ENCODE measurements at regions of chr4 and their contacts with region 1.

Region 1: GRCh38 chr4:140326395-140326993 is 47.0 kb upstream of the SCOC start:
- DNase-seq: peak; percentile 41
- H3K4me3 ChIP-seq: no peak overlapping the region
- H3K27ac ChIP-seq: no peak overlapping the region
- H3K4me1 ChIP-seq: no peaks in the 10 kb centered on the region
- H3K27me3 ChIP-seq: peaks cover 4% of the 10 kb centered on the region
- CTCF ChIP-seq: peak; percentile 42

Region 2: GRCh38 chr4:139651282-139652194 is 675.0 kb before region 1 on chr4:
- intact Hi-C with region 1: loop called (anchors 10 kb)
- DNase-seq: peak; percentile 73
- H3K4me3 ChIP-seq: no peak overlapping the region
- H3K27ac ChIP-seq: no peak overlapping the region
- H3K4me1 ChIP-seq: no peaks in the 10 kb centered on the region
- H3K27me3 ChIP-seq: no peaks in the 10 kb centered on the region
- CTCF ChIP-seq: peak; percentile 91

Region 3: GRCh38 chr4:139734875-139735380 is 591.6 kb before region 1 on chr4:
- intact Hi-C with region 1: loop called (anchors 10 kb)
- DNase-seq: peak; percentile 71
- H3K4me3 ChIP-seq: peak overlapping the region; percentile 33
- H3K27ac ChIP-seq: no peak overlapping the region
- H3K4me1 ChIP-seq: no peaks in the 10 kb centered on the region
- H3K27me3 ChIP-seq: no peaks in the 10 kb centered on the region
- CTCF ChIP-seq: peak; percentile 57

Region 4: GRCh38 chr4:140012688-140013486 is 313.6 kb before region 1 on chr4:
- intact Hi-C with region 1: loop called (anchors 5 kb)
- DNase-seq: peak; percentile 87
- H3K4me3 ChIP-seq: no peak overlapping the region
- H3K27ac ChIP-seq: no peak overlapping the region
- H3K4me1 ChIP-seq: no peaks in the 10 kb centered on the region
- H3K27me3 ChIP-seq: no peaks in the 10 kb centered on the region
- CTCF ChIP-seq: peak; percentile 54

Region 5: DNA sequence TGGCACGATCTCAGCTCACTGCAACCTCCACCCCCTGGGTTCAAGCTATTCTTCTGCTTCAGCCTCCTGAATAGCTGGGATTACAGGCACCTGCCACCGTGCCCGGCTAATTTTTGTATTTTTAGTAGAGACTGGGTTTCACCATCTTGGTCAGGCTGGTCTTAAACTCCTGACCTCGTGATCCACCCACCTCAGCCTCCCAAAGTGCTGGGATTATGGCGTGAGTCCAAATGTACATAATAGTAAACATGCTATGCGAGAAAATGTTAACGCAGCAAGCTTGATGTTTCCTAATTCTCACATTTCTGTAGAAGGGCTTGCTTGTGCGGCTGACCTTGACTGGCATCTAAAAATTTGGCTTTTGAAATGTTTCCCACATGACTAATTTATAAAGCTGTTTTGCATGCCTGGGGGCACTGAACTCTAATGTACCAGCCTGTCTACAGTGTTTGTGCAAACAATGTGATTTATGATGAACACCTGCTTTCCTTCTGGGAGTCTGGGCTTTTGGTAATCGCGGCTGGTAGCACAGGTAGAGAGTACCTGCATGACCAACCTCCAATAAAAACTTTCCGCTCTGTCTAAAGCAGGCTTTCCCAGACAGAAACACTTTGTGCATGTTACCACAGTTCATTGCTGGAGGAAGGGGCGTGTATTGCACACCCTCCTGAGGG is 1526.7 kb after region 1 on chr4:
- intact Hi-C with region 1: no loop called
- DNase-seq: peak; percentile 53
- H3K4me3 ChIP-seq: no peak overlapping the region
- H3K27ac ChIP-seq: peak overlapping the region; percentile 25
- H3K4me1 ChIP-seq: no peaks in the 10 kb centered on the region
- H3K27me3 ChIP-seq: no peaks in the 10 kb centered on the region
- CTCF ChIP-seq: no peak